ENCODE measurements at regions of chr18 and their contacts with region 1.

Region 1: GRCh38 chr18:74495581-74496507 is at the start of gene CNDP2:
- DNase-seq: peak; percentile 100
- total RNA-seq, gene CNDP2: 65.7 TPM

Region 2: GRCh38 chr18:74147779-74148542 is 347.9 kb before region 1 on chr18 and contains the starts of genes FBXO15 and TIMM21:
- intact Hi-C with region 1: loop called (anchors 2 kb)
- DNase-seq: peak; percentile 97
- total RNA-seq, gene FBXO15: 0.51 TPM
- total RNA-seq, gene TIMM21: 105 TPM

Region 3: GRCh38 chr18:74196220-74197119 is 299.4 kb before region 1 on chr18:
- intact Hi-C with region 1: loop called (anchors 5 kb)
- DNase-seq: no peak

Region 4: GRCh38 chr18:74353169-74353775 is 142.6 kb before region 1 on chr18:
- intact Hi-C with region 1: loop called (anchors 5 kb)
- DNase-seq: no peak

Region 5: DNA sequence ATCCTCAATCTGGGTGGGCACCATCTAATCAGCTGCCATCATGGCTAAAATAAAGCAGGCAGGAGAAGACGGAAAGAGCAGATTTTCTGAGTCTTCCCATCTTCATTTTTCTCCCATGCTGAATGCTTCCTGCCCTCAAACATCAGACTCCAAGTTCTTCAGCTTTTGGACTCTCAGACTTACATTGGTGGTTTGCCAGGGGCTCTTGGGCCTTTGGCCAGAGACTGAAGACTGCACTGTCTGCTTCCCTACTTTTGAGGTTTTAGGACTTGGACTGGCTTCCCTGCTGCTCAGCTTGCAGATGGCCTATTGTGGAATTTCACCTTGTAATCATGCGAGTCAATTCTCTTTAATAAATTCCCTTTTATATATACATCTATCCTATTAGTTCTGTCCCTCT is 75.4 kb before region 1 on chr18:
- intact Hi-C with region 1: no loop called
- DNase-seq: no peak

Region 6: DNA sequence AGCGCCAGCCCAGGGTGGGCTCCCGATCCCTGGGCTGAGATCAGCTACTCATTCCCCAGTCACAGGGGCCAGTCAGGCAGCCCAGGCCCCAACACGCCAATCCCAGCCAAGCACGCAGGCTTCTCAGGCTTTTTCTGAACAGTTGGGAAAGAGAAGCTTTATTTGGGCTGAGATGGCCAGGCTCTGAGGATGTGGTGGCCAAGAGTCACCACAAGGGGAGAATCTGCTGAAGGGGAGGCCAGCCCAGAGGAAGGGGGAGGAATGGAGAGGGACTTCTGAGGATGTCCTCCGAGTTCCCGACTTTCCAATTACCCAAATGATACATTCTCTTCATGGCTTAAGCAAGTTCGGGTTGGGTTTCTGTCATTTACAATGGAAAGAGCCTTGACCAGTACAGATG is 36.0 kb before region 1 on chr18:
- intact Hi-C with region 1: loop called (anchors 2 kb)
- DNase-seq: no peak

Region 7: DNA sequence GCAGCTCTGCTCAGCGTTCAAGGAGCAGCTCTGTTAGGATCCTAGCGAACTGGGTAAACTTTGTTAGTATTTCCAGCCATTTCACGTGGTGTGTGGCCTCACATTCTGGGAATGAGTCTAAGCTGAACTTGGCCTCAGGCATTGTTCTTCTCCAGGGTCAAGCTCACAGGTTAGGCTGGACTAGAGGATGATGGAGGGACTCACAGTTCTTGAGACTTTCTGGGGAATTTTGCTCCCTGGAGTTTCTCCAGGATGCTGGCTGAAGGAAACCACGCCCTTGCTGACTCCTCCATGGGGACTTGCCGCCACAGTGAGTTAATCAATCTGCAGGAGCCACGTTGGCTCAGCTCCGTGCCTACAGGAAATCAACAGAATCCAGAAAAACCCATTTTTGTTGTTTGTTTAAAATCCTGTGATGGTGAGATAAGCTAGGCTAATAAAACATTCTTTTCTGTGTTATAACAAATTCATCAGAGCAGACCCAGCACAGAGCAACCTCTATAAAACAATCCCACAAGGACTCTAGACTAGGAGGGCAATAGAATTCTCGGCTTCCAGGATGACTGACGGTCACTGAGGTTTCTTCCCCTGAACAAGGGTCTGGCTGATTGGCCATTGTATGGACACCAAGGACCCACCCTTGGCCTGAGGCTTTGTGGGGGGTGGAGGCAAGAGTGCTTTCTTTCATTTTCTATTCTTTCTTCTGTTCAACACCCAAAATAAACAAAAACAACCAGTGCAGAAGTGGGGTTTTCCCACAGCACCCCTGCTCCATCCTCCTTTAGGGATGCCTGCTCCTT is 51.1 kb after region 1 on chr18:
- intact Hi-C with region 1: loop called (anchors 2 kb)
- DNase-seq: no peak

Region 8: DNA sequence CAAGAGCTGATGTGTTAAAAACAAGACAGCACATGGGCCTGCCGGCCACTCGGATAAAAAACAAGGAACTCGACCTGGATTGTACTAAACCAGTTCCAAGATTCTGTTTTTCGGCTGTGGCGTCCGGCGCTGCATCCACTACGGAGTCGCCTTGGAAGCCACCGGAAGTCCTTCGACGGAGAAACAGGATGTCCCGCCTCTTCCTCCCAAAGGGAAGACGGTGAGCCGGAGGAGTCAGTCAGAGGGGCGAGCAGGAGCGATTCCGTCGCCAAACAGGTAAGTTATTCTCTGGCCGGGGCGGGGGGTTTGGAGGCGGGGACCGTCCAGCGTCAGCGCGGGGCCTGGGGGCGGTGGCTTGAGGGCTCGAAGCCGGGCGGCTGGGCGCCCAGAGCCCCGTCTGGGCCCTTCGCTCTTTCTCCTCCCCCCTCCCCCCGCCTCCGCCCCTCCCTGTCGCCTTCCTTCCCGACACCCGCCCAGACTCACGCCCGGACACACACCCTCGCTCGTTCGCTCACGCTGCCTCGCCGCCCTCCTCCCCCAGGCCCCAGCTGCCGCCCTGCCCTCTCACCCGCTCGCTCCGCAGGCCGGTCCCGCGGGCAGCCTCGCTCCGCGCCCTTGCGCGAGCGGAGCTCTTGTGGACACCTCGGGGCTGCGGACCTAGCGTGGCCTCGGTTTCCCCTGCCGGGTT is 102.0 kb after region 1 on chr18 and contains the start of gene ZNF407:
- intact Hi-C with region 1: loop called (anchors 2 kb)
- DNase-seq: peak; percentile 93
- total RNA-seq, gene ZNF407: 14.1 TPM

Measured in cardiac septum (tissue), 1 donor.